PC-9 (cell line): ENCODE measurements at regions of chr20 and their contacts with region 1.

Region 1: GRCh38 chr20:35771689-35772562 is at the start of gene PHF20:
- DNase-seq: peak; percentile 77 to 98
- H3K4me3 ChIP-seq: peak within 1 kb of the TSS; percentile 87
- H3K27ac ChIP-seq: no peak within 1 kb of the TSS
- H3K4me1 ChIP-seq: peaks cover 24% of the 10 kb centered on the region
- H3K27me3 ChIP-seq: no peaks in the 10 kb centered on the region
- CTCF ChIP-seq: no peak
- total RNA-seq, gene PHF20: 59.8 and 60.2 TPM in 2 replicates

Region 2: GRCh38 chr20:35710039-35710438 is 61.9 kb before region 1 on chr20:
- CTCF ChIA-PET with region 1: interaction called, 12 read pairs
- POLR2A ChIA-PET with region 1: no interaction called
- intact Hi-C with region 1: no loop called
- DNase-seq: no peak
- H3K4me3 ChIP-seq: no peak overlapping the region
- H3K27ac ChIP-seq: no peak overlapping the region
- H3K4me1 ChIP-seq: no peaks in the 10 kb centered on the region
- H3K27me3 ChIP-seq: no peaks in the 10 kb centered on the region
- CTCF ChIP-seq: no peak